PC-9 (cell line): ENCODE measurements at regions of chr5 and their contacts with region 1.

Region 1: DNA sequence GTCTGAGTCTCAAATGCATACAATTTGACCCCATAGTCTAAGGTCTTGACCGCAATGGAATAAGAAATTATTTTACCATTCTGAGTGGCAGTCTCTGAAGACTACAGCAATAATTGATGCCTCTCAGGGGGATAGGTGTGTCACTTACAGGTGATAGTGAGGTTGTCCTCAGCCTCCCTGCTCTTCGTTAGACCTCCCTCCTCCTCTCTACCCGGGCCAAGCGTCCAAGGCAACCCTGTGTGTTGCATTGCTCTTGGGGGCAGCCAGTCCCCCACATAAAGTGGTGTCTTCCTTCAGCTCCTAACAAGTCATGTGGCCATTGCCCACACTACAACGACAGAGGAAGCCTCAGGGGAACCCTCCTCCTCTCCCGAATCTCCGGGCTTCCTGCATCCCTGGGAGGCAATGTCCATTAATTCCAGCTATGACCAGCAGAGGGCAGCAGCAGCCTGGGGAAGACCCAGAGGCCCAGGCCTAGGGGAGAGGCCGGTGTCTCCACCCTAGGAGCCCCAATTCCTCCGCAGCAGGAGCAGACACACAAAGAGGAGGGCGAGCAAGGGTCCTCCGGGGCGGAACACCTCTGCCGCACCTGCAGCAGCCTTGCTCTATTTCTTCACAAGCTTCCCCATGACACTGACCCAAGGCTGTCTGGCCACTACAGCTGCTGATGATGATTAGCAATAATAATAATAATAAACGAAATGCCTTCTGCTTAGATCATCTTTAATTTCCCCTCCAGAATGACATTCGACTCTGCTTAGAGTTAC is 134.8 kb downstream of the KCNIP1 start:
- DNase-seq: peak; percentile 43 to 73
- H3K4me3 ChIP-seq: no peak overlapping the region
- H3K27ac ChIP-seq: no peak overlapping the region
- H3K4me1 ChIP-seq: peaks cover 11% of the 10 kb centered on the region
- H3K27me3 ChIP-seq: no peaks in the 10 kb centered on the region; the same call in 1 of the 2 replicates
- CTCF ChIP-seq: peak; percentile 96

Region 2: DNA sequence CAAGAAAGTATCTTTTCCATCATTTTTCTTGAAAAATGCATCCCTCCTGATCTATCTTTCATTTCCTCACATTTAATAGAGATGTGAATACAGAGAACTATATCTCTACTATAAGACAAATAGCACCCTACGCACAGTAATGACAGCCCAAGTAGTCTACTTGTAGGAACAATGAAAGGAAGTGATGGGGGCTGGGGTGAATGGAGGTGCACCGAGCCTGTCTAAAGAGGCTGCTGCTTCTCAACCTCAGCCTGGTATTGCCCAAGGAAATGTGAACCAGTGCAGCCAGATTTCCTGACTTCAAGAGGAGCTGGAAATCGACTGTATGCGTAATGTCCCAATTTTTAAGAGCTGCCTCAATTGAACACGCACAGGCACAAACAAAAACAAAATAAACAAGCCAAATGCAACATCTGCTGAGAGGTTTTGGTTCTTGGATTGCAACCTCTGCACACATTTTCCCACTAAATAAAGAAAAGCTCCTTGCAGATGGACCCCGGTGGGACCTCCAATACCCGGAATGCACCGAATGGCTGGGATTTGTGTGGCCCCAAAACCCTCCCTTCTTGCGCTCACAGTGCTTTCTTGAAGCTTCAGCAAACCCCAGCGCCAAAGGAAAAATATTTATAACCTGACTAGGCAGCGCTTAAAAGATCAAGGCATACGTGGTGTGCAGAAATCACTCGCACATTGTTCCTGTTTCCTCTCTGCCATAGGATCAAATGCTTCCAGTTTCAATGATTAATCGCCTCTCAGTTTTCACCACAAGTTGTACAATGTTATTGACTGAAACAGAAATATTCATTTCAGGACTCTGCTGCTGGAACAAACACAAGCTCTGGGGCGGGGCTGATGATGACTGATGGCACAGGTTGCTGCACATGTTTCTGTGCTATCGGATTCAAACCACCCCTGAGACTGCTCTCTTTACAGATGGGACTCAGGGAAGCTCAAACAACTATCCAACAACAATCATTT is 66.5 kb before region 1 on chr5:
- CTCF ChIA-PET with region 1: no interaction called
- POLR2A ChIA-PET with region 1: no interaction called
- intact Hi-C with region 1: no loop called
- DNase-seq: peak in 1 of 2 experiments; percentile 84
- H3K4me3 ChIP-seq: peak overlapping the region; percentile 24; the same call in 1 of the 2 replicates
- H3K27ac ChIP-seq: peak overlapping the region; percentile 26; the same call in 1 of the 2 replicates
- H3K4me1 ChIP-seq: peaks cover 32% of the 10 kb centered on the region
- H3K27me3 ChIP-seq: no peaks in the 10 kb centered on the region
- CTCF ChIP-seq: no peak

Region 3: DNA sequence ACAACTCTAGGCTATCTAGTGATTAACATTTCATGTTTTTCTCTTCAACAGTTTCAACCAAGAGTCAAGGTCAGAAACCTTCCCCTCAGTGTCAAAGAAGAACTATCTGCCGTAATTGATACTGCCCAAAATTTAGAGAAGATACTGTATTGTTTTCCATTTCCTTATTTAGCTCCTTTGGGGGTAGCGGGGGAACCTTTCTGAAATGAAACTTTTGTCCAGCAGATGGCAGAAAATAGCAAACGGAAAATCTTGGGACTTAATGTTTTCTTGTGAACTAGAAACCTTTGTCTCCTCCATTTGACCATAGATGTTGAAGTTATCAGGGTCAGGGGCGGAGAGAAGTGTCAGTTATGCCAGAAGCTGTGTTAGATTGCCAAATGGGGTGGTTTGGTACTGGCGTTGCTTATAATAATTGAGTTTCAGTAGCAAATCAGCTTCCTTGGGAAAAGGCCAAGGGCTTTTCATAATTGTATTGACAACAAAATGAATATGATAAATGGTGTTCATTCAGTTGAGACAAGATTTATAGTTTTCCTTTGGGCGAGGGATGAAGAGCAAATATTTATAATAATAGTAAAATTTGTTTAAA is 568.7 kb after region 1 on chr5:
- CTCF ChIA-PET with region 1: no interaction called
- POLR2A ChIA-PET with region 1: no interaction called
- intact Hi-C with region 1: loop called (anchors 10 kb)
- DNase-seq: peak in 1 of 2 experiments; percentile 33
- H3K4me3 ChIP-seq: no peak overlapping the region
- H3K27ac ChIP-seq: no peak overlapping the region
- H3K4me1 ChIP-seq: no peaks in the 10 kb centered on the region
- H3K27me3 ChIP-seq: no peaks in the 10 kb centered on the region
- CTCF ChIP-seq: peak; percentile 70